Activated CD8-positive, alpha-beta T cell treated with anti-CD3 and anti-CD28 coated beads, Interleukin-2, amount 10 ng/mL, durations not matched to agents 7 days and 5 days (primary cell): ENCODE measurements at regions of chr5 and their contacts with region 1.

Region 1: DNA sequence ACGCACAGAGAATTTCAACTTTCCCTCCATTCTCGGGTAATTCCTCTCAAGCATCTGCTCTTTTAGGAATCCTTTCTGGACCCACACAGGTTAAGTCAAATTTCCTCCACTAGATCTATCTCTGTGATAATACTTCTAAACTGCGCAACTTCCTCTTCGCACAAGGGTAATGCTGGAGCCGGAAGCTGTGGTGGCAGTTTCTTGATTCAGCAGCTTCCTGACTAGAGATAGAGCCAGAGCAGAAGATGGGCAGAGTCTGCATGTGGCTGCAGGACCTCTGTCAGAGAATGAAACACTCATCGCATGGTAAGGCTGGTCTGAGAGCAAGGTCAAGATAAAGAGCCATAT is 11.1 kb upstream of the CDC42SE2 start:
- DNase-seq: peak; percentile 91
- ATAC-seq: peak; percentile 84
- H3K4me3 Mint-ChIP-seq: peak overlapping the region; percentile 92
- H3K27ac Mint-ChIP-seq: peak overlapping the region; percentile 93
- H3K4me1 Mint-ChIP-seq: peaks cover 77% of the 10 kb centered on the region
- H3K27me3 Mint-ChIP-seq: no peaks in the 10 kb centered on the region

Region 2: GRCh38 chr5:131224387-131225201 is 28.2 kb before region 1 on chr5:
- CTCF ChIA-PET with region 1: interaction called, 14 read pairs
- POLR2A ChIA-PET with region 1: interaction called, 15 read pairs
- DNase-seq: peak; percentile 60
- ATAC-seq: peak; percentile 83
- H3K4me3 Mint-ChIP-seq: no peak overlapping the region
- H3K27ac Mint-ChIP-seq: no peak overlapping the region
- H3K4me1 Mint-ChIP-seq: peaks cover 14% of the 10 kb centered on the region
- H3K27me3 Mint-ChIP-seq: no peaks in the 10 kb centered on the region

Region 3: DNA sequence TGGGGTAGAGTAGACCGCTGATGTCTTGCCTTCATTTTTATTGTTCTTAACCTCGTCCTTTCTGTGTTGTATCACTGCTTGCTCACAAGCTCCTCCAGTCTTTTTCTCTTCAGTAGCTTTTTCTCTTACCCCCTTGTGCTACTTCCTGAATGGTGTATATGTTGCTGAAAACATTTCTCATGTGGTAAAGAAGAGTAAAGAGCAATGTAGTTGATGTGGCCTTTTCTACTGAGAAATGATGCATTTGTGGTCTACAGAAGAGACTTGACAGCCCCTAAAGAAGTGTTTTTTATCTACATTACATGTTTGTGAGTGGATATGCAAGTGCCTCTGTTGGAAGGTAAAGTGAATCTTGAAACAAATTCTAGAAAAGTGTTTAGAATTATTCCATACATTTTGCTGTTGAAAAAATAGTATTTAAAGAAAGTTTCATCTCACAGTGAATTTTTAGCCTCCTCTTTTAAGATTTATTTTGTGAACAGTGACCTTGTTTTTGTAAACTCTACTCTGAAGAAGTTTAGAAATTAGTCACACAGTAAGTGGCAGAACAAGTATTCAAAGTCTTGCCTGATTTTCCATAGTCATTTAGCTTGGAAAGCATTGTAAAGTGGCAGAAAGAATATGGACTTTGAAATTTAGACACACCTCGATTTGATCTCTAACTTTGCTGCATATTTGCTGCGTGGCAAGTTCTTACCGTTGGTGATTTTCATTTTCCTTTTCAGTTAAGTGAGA is 28.5 kb after region 1 on chr5:
- CTCF ChIA-PET with region 1: interaction called, 3 read pairs
- POLR2A ChIA-PET with region 1: interaction called, 13 read pairs
- DNase-seq: no peak
- ATAC-seq: peak; percentile 79
- H3K4me3 Mint-ChIP-seq: peak overlapping the region; percentile 78
- H3K27ac Mint-ChIP-seq: peak overlapping the region; percentile 85
- H3K4me1 Mint-ChIP-seq: peaks cover 86% of the 10 kb centered on the region
- H3K27me3 Mint-ChIP-seq: no peaks in the 10 kb centered on the region